Activated naive CD4-positive, alpha-beta T cell treated with anti-CD3 and anti-CD28 coated beads, Interleukin-2, amount 10 ng/mL, durations not matched to agents 7 days and 5 days (primary cell): ENCODE measurements at regions of chr6 and their contacts with region 1.

Region 1: DNA sequence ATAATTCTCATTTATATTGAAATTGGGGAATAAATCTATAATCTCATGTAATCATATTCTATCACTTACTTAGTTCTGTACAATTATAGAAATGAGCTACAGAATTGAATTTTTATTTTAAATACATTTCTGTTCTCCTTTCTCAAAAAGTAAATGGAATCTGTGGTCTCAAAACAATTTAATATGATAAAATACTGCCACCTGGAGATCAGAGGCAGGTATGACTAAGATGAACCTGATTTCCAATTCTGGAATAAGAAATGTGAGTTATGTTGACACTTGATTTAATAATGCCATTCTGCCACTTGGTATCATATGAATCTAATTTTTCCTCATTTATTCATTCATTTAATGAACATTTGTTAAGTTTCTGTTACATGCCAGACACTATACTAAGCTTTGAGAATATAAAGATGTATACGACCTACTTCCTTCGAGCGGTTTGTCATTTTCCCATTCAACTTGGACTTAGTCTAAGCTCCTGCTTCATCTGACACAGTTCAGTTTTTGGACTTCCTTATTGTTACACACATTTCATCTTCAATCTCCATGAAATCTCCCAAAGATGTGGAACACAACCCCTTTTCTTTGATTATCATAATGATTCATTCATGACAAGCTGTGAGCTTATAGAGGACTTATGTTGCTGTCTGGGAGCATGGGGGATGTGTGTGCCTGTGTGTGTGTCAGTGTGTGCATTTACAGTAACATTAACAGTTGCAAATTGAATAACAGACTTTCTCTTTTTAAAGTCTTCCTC is 7.5 kb upstream of the CCDC28A start:
- DNase-seq: no peak
- H3K4me3 Mint-ChIP-seq: no peak overlapping the region
- H3K27ac Mint-ChIP-seq: no peak overlapping the region
- H3K4me1 Mint-ChIP-seq: peaks cover 4% of the 10 kb centered on the region
- H3K27me3 Mint-ChIP-seq: no peaks in the 10 kb centered on the region

Region 2: GRCh38 chr6:138692058-138692977 is 73.8 kb before region 1 on chr6:
- CTCF ChIA-PET with region 1: interaction called, 11 read pairs
- DNase-seq: peak; percentile 67
- H3K4me3 Mint-ChIP-seq: peak overlapping the region; percentile 74
- H3K27ac Mint-ChIP-seq: no peak overlapping the region
- H3K4me1 Mint-ChIP-seq: peaks cover 11% of the 10 kb centered on the region
- H3K27me3 Mint-ChIP-seq: peaks cover 60% of the 10 kb centered on the region